ENCODE measurements at regions of chr1 and their contacts with region 1.

Region 1: DNA sequence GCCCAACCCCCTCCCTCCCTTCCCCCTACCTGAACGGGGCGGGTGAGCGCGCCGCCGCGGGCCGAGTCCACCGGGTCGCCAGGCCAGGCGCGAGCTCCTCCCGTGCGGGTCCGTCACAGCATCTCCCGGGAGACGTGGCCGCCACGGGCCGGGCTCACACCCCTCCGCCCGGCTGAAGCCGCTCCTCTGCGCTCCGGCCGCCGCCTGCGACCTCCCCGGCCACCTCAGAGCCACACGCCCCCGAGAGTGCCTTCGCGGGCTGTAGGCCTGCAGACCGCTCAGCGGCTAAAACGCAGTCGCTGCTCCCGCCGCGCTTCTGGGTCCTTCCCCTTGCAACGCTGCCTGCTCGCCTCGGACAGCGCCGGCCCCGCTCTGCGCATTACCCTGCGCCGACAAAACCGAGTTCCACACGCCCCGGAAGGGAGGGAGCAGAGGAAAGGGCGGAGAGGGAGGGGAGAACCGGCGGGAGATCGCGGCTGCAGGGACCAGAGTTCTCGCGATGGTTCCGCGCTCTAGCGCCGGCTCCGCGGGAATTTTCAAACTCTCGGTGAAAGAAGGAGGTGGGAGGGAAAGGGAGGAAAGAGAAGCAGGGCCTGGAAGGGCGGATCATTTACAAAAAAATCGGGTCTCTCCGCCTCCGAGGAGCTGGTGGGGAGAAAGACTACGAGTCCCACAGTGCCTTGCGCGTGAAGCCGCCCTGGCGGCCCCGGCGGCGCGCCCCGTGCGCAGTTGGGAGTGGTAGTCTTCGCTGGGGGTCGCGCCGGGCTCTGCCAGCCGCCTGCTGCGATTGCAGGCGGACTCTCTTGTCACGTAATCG is at the start of gene AHCTF1:
- DNase-seq: peak; percentile 99
- ATAC-seq: peak; percentile 93
- H3K4me3 ChIP-seq: peak within 1 kb of the TSS; percentile 97
- H3K27ac ChIP-seq: peak within 1 kb of the TSS; percentile 77
- H3K4me1 ChIP-seq: peaks cover 15% of the 10 kb centered on the region; the same call in 1 of the 2 replicates
- H3K27me3 ChIP-seq: no peaks in the 10 kb centered on the region
- CTCF ChIP-seq: no peak
- total RNA-seq, gene AHCTF1: 38.0 and 52.3 TPM in 2 replicates

Region 2: GRCh38 chr1:246724016-246724730 is 207.6 kb before region 1 on chr1 and contains the start of gene SCCPDH:
- CTCF ChIA-PET with region 1: no interaction called
- POLR2A ChIA-PET with region 1: interaction called, 32 read pairs
- intact Hi-C with region 1: no loop called
- DNase-seq: peak; percentile 76
- ATAC-seq: peak; percentile 90
- H3K4me3 ChIP-seq: peak within 1 kb of the TSS; percentile 79
- H3K27ac ChIP-seq: peak within 1 kb of the TSS; percentile 65
- H3K4me1 ChIP-seq: no peaks in the 10 kb centered on the region
- H3K27me3 ChIP-seq: no peaks in the 10 kb centered on the region
- CTCF ChIP-seq: no peak
- total RNA-seq, gene SCCPDH: 46.1 and 50.8 TPM in 2 replicates

Region 3: GRCh38 chr1:246820666-246821065 is 111.1 kb before region 1 on chr1:
- CTCF ChIA-PET with region 1: no interaction called
- POLR2A ChIA-PET with region 1: no interaction called
- intact Hi-C with region 1: no loop called
- DNase-seq: no peak
- ATAC-seq: no peak
- H3K4me3 ChIP-seq: no peak overlapping the region
- H3K27ac ChIP-seq: no peak overlapping the region
- H3K4me1 ChIP-seq: no peaks in the 10 kb centered on the region
- H3K27me3 ChIP-seq: no peaks in the 10 kb centered on the region
- CTCF ChIP-seq: no peak

Region 4: DNA sequence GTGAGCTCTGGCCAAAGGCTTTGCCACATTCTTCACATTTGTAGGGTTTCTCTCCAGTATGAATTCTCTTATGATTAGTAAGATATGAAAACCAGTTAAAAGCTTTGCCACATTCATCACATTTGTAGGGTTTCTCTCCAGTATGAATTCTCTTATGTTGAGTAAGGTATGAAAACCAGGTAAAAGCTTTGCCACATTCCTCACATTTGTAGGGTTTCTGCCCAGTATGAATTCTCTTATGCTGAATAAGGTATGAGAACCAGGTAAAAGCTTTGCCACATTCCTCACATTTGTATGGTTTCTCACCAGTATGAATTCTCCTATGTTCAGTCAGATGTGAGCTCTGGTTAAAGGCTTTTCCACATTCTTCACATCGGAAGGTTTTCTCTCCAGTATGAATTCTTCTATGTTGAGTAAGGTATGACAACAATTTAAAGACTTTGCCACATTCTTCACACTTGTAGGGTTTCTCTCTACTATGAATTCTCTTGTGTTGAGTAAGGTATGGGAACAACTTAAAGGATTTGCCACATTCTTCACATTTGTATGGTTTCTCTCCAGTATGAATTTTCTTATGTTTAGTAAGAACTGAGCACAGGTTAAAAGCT is 55.4 kb after region 1 on chr1:
- CTCF ChIA-PET with region 1: no interaction called
- POLR2A ChIA-PET with region 1: no interaction called
- intact Hi-C with region 1: no loop called
- DNase-seq: peak; percentile 14
- ATAC-seq: no peak
- H3K4me3 ChIP-seq: peak overlapping the region; percentile 33; the same call in 1 of the 2 replicates
- H3K27ac ChIP-seq: no peak overlapping the region
- H3K4me1 ChIP-seq: no peaks in the 10 kb centered on the region
- H3K27me3 ChIP-seq: no peaks in the 10 kb centered on the region
- CTCF ChIP-seq: no peak

Region 5: GRCh38 chr1:247078261-247079140 is 146.7 kb after region 1 on chr1 and contains the start of gene ZNF670:
- CTCF ChIA-PET with region 1: no interaction called
- POLR2A ChIA-PET with region 1: no interaction called
- intact Hi-C with region 1: loop called (anchors 5 kb)
- DNase-seq: peak; percentile 99
- ATAC-seq: peak; percentile 99
- H3K4me3 ChIP-seq: peak within 1 kb of the TSS; percentile 85
- H3K27ac ChIP-seq: peak within 1 kb of the TSS; percentile 19; the same call in 1 of the 2 replicates
- H3K4me1 ChIP-seq: peaks cover 7% of the 10 kb centered on the region
- H3K27me3 ChIP-seq: no peaks in the 10 kb centered on the region
- CTCF ChIP-seq: peak; percentile 43; the same call in 1 of the 2 replicates
- total RNA-seq, gene ZNF670: 5.6 and 5.9 TPM in 2 replicates

Region 6: DNA sequence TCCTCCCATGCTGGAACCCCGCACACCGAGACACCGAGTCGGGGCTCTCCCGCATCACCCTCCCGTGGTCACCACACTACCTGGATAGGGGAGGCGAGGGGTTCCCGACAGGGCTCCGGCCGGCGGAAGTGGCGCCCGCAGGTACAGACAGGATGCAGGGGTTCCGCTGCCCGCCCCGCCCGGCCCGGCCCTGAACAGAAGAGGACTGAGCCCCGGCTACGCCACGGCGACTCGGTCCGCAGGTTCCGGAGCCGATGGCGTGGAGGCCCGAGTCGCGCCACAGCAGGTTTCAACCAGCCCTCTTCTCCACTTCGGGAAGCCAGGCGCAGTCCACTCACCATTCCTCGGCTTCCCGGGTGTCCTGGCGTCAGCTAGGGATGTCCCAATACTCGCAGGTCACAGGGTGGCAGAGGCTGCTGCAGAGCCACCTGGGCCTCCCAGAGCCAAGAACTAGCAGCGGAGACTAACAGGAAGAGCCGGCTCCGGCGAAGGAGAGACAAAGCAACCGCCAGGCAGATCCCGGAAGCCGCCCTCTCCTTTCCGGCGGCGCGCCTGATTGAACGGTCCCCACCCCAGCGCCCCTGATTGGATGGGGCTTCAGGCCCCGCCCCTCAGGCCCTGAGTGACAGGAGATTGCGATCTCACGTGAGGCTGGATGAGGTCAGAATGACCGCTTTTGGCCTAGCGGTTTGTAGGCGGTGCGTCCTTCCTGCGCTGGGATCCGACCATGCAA is 172.3 kb after region 1 on chr1 and contains the start of gene ZNF669:
- CTCF ChIA-PET with region 1: no interaction called
- POLR2A ChIA-PET with region 1: no interaction called
- intact Hi-C with region 1: loop called (anchors 2 kb)
- DNase-seq: peak; percentile 98
- ATAC-seq: peak; percentile 97
- H3K4me3 ChIP-seq: peak within 1 kb of the TSS; percentile 98
- H3K27ac ChIP-seq: peak within 1 kb of the TSS; percentile 84
- H3K4me1 ChIP-seq: peaks cover 17% of the 10 kb centered on the region
- H3K27me3 ChIP-seq: no peaks in the 10 kb centered on the region
- CTCF ChIP-seq: no peak
- total RNA-seq, gene ZNF669: 12.3 and 14.1 TPM in 2 replicates

Region 7: GRCh38 chr1:247111700-247112478 is 180.1 kb after region 1 on chr1:
- CTCF ChIA-PET with region 1: no interaction called
- POLR2A ChIA-PET with region 1: interaction called, 12 read pairs
- intact Hi-C with region 1: no loop called
- DNase-seq: peak; percentile 48
- ATAC-seq: peak; percentile 74
- H3K4me3 ChIP-seq: peak overlapping the region; percentile 83
- H3K27ac ChIP-seq: no peak overlapping the region
- H3K4me1 ChIP-seq: peaks cover 18% of the 10 kb centered on the region
- H3K27me3 ChIP-seq: no peaks in the 10 kb centered on the region
- CTCF ChIP-seq: no peak